Ovary (tissue), 10 donors: ENCODE measurements at regions of chr20 and their contacts with region 1.

Region 1: GRCh38 chr20:53660078-53660909 is 66.7 kb upstream of the ZNF217 start:
- DNase-seq: peak; percentile 60 to 74 (median 66)
- H3K4me3 ChIP-seq: peak overlapping the region; percentile 38
- H3K27ac ChIP-seq: peak overlapping the region; percentile 35 to 74
- H3K4me1 ChIP-seq: peaks cover 8% of the 10 kb centered on the region
- H3K27me3 ChIP-seq: no peaks in the 10 kb centered on the region
- CTCF ChIP-seq: no peak
- EP300 ChIP-seq: no peak
- POLR2A ChIP-seq: peak; percentile 20

Region 2: DNA sequence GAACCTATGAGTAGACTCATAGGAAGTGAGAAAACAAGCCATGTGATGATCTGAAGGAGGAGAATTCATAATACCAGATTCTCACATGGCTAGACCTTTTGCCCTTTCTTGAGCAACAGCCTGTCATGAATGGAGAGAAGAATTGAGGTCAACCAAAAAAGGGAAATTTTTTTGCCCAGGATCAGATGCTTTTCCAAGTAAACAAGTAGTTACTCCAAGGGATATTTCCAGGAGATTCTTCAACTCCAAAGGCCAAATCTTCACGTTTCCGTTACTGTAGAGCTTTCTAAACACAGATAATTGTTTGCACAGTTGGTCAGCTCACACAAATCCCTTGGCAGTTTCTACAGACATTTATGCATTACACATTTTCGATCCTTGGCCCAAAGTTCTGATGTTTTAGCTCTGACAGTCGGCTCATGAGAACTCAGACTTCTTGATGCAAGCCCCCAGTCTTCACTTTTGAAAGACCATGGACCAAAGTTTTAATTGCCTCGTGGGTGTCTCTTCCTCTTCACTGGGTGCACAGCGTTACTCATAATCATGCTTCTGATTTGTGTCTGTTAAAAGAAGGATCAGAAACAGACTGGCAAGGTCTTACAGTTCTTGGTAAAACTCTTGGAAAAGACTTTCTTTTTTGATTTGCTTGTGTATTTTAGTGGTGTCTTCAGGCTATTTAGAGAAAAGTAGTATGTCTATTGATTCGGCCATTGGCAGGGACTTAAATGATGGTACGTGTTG is 573.1 kb before region 1 on chr20:
- intact Hi-C with region 1: no loop called
- DNase-seq: no peak
- H3K4me3 ChIP-seq: no peak overlapping the region
- H3K27ac ChIP-seq: no peak overlapping the region
- H3K4me1 ChIP-seq: peaks cover 4% of the 10 kb centered on the region
- H3K27me3 ChIP-seq: no peaks in the 10 kb centered on the region
- CTCF ChIP-seq: no peak
- EP300 ChIP-seq: no peak
- POLR2A ChIP-seq: no peak

Region 3: GRCh38 chr20:53570521-53571357 is 89.6 kb before region 1 on chr20:
- intact Hi-C with region 1: no loop called
- DNase-seq: peak in 2 of 5 donors; percentile 38
- H3K4me3 ChIP-seq: no peak overlapping the region
- H3K27ac ChIP-seq: no peak overlapping the region
- H3K4me1 ChIP-seq: peaks cover 6% of the 10 kb centered on the region
- H3K27me3 ChIP-seq: no peaks in the 10 kb centered on the region
- CTCF ChIP-seq: no peak
- EP300 ChIP-seq: no peak
- POLR2A ChIP-seq: no peak

Region 4: GRCh38 chr20:53623454-53624211 is 36.7 kb before region 1 on chr20:
- intact Hi-C with region 1: loop called in 1 of 4 experiments (anchors 5 kb)
- DNase-seq: peak; percentile 64 to 79 (median 74)
- H3K4me3 ChIP-seq: peak overlapping the region; percentile 25
- H3K27ac ChIP-seq: peak overlapping the region; percentile 82 to 90
- H3K4me1 ChIP-seq: peaks cover 9% of the 10 kb centered on the region
- H3K27me3 ChIP-seq: no peaks in the 10 kb centered on the region
- CTCF ChIP-seq: no peak
- EP300 ChIP-seq: no peak
- POLR2A ChIP-seq: peak; percentile 33

Region 5: GRCh38 chr20:53718142-53719021 is 58.1 kb after region 1 on chr20:
- intact Hi-C with region 1: no loop called
- DNase-seq: no peak
- H3K4me3 ChIP-seq: no peak overlapping the region
- H3K27ac ChIP-seq: no peak overlapping the region
- H3K4me1 ChIP-seq: no peaks in the 10 kb centered on the region
- H3K27me3 ChIP-seq: no peaks in the 10 kb centered on the region
- CTCF ChIP-seq: no peak
- EP300 ChIP-seq: no peak
- POLR2A ChIP-seq: no peak

Region 6: DNA sequence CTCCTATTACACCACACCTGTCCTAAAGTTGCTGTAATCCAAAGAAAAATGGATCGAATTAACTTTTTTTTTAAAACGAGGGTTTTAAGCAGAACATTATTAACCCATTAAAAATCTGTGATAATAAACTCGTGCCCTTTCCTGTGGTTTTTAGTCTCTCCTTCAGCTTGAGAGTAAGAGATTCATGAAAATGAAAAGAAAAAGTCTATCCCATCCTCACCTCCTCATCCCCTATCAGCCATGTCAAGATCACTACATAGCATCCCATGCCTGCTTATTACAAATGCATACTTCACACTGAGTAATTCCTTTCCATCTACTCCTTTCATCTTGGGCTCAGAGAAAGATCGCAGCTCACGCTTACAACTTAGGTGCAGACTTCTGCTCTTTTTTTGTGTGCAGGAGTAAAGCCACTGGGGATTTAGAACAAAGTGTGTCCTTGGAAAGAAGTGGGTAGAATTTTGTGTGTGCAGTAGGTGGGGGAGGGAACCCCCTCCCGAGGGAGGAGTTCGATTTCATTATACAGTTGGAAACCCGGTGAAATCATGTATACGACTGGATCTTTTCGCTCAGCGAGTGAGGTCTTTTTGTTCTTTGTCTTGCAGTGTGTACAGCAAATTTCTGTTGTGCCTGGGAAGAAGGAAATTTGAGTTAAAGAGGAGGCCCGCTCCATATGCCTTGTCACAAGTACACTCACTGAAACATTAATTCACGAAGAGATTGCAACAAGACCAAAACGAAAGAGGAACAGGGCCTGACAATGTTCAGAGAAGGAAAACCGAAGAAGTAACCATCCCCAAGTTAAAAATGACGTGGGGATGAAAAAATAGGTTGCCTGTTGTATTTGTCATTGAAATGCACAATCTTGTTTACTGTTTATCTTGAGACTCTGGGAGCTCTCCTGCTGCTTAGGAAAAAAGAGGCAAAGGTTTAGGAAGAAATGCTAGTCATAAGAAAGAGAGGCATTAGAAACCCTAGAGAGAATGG is 79.8 kb after region 1 on chr20:
- intact Hi-C with region 1: no loop called
- DNase-seq: no peak
- H3K4me3 ChIP-seq: no peak overlapping the region
- H3K27ac ChIP-seq: no peak overlapping the region
- H3K4me1 ChIP-seq: no peaks in the 10 kb centered on the region
- H3K27me3 ChIP-seq: no peaks in the 10 kb centered on the region
- CTCF ChIP-seq: no peak
- EP300 ChIP-seq: no peak
- POLR2A ChIP-seq: no peak

Region 7: GRCh38 chr20:53869466-53870258 is 209.4 kb after region 1 on chr20:
- intact Hi-C with region 1: loop called in 2 of 4 experiments (anchors 5 to 10 kb)
- DNase-seq: peak in 4 of 5 donors; percentile 40 to 70 (median 49)
- H3K4me3 ChIP-seq: no peak overlapping the region
- H3K27ac ChIP-seq: peak overlapping the region in 1 of 2 donors; percentile 28
- H3K4me1 ChIP-seq: peaks cover 7% of the 10 kb centered on the region
- H3K27me3 ChIP-seq: no peaks in the 10 kb centered on the region
- CTCF ChIP-seq: peak; percentile 26 to 72 (median 69)
- EP300 ChIP-seq: no peak
- POLR2A ChIP-seq: no peak